Natural killer cell (primary cell): ENCODE measurements at regions of chr2 and their contacts with region 1.

Region 1: GRCh38 chr2:187453078-187453641 is 5.1 kb upstream of the CALCRL start:
- DNase-seq: peak in 1 of 2 donors; percentile 31
- ATAC-seq: no peak
- H3K4me3 ChIP-seq: no peak overlapping the region
- H3K4me3 Mint-ChIP-seq: no peak overlapping the region
- H3K27ac ChIP-seq: no peak overlapping the region
- H3K27ac Mint-ChIP-seq: no peak overlapping the region
- H3K4me1 ChIP-seq: no peaks in the 10 kb centered on the region
- H3K4me1 Mint-ChIP-seq: peaks cover 3 to 6% of the 10 kb centered on the region in 2 donors
- H3K27me3 ChIP-seq: no peaks in the 10 kb centered on the region
- H3K27me3 Mint-ChIP-seq: no peaks in the 10 kb centered on the region
- CTCF ChIP-seq: peak; percentile 24

Region 2: DNA sequence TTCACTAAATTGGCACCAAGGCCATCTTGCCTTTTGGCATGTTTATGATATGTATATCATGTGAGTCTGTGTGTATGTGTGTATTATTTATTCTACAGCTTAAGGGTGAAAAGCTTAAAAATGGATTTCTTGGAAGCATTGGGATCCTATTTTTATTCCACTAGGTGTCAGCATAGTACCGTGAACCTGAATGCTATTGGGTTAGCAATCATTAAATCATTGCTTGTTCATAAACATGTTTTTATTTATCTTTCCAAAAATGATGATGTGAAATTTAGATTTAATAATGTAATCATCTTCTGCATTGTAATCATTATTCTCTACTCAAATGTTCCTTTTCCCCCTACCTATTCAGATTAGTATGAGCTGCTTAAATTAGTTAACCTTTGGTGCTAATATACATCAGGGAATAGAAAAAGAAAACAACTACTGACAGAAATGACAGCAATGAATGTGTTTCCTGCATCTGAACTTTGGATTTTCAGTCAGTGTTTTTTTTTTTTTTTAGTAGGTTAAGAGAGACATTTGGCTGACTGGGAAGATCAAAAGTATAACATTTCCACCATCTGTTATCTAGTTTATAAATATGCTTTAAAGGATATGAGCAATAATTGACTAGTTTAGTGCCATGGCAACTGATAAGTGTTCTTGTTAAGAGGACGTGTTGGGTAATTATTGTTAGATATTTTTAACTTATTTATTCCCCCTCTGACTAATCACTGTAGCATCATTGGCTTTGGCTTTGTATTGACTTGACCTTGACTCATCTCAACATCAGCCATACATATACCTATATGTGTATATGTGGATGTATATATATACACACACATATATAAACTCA is 590.1 kb before region 1 on chr2:
- intact Hi-C with region 1: loop called (anchors 5 kb)
- DNase-seq: peak in 1 of 2 donors; percentile 2
- ATAC-seq: no peak
- H3K4me3 ChIP-seq: no peak overlapping the region
- H3K4me3 Mint-ChIP-seq: no peak overlapping the region
- H3K27ac ChIP-seq: no peak overlapping the region
- H3K27ac Mint-ChIP-seq: no peak overlapping the region
- H3K4me1 ChIP-seq: no peaks in the 10 kb centered on the region
- H3K4me1 Mint-ChIP-seq: no peaks in the 10 kb centered on the region
- H3K27me3 ChIP-seq: no peaks in the 10 kb centered on the region
- H3K27me3 Mint-ChIP-seq: no peaks in the 10 kb centered on the region
- CTCF ChIP-seq: no peak

Region 3: DNA sequence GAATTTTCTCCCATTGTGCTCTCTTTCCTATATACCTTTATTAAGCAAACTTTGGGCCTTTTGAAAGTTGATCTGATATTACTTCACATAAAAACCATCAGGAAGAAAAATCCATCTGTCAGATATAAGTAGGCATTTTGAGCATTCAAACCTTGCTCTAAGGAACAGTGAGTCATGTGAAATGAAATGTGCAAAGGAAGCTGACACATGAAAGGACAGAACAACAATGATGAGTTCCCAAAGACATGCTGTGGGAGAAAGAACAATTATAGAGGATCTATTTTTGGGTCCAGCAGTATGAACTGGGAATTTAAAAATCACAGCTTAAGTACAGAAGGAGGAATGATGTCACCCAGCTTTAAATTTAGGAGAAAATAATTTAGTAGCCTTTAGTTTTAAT is 23.2 kb before region 1 on chr2:
- intact Hi-C with region 1: no loop called
- DNase-seq: no peak
- ATAC-seq: no peak
- H3K4me3 ChIP-seq: no peak overlapping the region
- H3K4me3 Mint-ChIP-seq: no peak overlapping the region
- H3K27ac ChIP-seq: no peak overlapping the region
- H3K27ac Mint-ChIP-seq: no peak overlapping the region
- H3K4me1 ChIP-seq: no peaks in the 10 kb centered on the region
- H3K4me1 Mint-ChIP-seq: no peaks in the 10 kb centered on the region
- H3K27me3 ChIP-seq: no peaks in the 10 kb centered on the region
- H3K27me3 Mint-ChIP-seq: no peaks in the 10 kb centered on the region
- CTCF ChIP-seq: no peak